Activated naive CD4-positive, alpha-beta T cell treated with anti-CD3 and anti-CD28 coated beads for 36 hours (primary cell): ENCODE measurements at regions of chr9 and their contacts with region 1.

Region 1: GRCh38 chr9:109903515-109904138 is 123.6 kb downstream of the PALM2AKAP2 start:
- DNase-seq: peak; percentile 83
- H3K4me3 Mint-ChIP-seq: no peak overlapping the region
- H3K27ac Mint-ChIP-seq: no peak overlapping the region
- H3K4me1 Mint-ChIP-seq: peaks cover 11% of the 10 kb centered on the region
- H3K27me3 Mint-ChIP-seq: no peaks in the 10 kb centered on the region

Region 2: GRCh38 chr9:109887079-109887478 is 16.5 kb before region 1 on chr9:
- CTCF ChIA-PET with region 1: interaction called, 15 read pairs
- intact Hi-C with region 1: no loop called
- DNase-seq: no peak
- H3K4me3 Mint-ChIP-seq: no peak overlapping the region
- H3K27ac Mint-ChIP-seq: peak overlapping the region; percentile 96
- H3K4me1 Mint-ChIP-seq: peaks cover 61% of the 10 kb centered on the region
- H3K27me3 Mint-ChIP-seq: no peaks in the 10 kb centered on the region

Region 3: GRCh38 chr9:110048403-110048975 is 144.9 kb after region 1 on chr9:
- CTCF ChIA-PET with region 1: interaction called, 19 read pairs
- intact Hi-C with region 1: no loop called
- DNase-seq: peak; percentile 86
- H3K4me3 Mint-ChIP-seq: peak overlapping the region; percentile 84
- H3K27ac Mint-ChIP-seq: no peak overlapping the region
- H3K4me1 Mint-ChIP-seq: peaks cover 33% of the 10 kb centered on the region
- H3K27me3 Mint-ChIP-seq: peaks cover 12% of the 10 kb centered on the region

Region 4: DNA sequence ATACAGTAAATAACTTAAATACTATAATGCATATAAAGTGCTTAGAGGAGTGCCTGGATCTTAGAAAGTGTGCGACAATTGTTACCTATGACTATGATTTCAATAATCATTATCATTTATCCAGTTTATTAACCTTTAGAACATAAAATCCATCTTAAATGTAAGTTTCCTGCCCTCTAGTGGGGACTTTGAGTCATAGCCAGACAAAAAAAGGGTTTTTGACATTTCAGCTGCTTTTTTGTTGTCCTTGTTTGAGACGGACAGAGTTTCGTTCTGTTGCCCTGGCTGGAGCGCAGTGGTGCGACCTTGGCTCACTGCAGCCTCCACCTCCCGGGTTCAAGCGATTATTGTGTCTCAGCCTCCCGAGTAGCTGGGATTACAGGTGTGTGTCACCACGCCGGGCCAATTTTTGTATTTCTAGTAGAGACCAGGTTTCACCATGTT is 314.1 kb after region 1 on chr9:
- CTCF ChIA-PET with region 1: interaction called, 4 read pairs
- intact Hi-C with region 1: loop called (anchors 1 kb)
- DNase-seq: no peak
- H3K4me3 Mint-ChIP-seq: no peak overlapping the region
- H3K27ac Mint-ChIP-seq: no peak overlapping the region
- H3K4me1 Mint-ChIP-seq: no peaks in the 10 kb centered on the region
- H3K27me3 Mint-ChIP-seq: no peaks in the 10 kb centered on the region